CD4-positive, alpha-beta memory T cell (primary cell): ENCODE measurements at regions of chr19 and their contacts with region 1.

Region 1: GRCh38 chr19:34926685-34927375 is at the start of gene ZNF30:
- DNase-seq: peak; percentile 62 to 76 (median 69)
- H3K4me3 ChIP-seq: peak within 1 kb of the TSS; percentile 25 to 67
- H3K4me3 Mint-ChIP-seq: peak within 1 kb of the TSS; percentile 89 to 94 (median 92)
- H3K27ac ChIP-seq: peak within 1 kb of the TSS; percentile 31
- H3K27ac Mint-ChIP-seq: peak within 1 kb of the TSS in 6 of 7 donors; percentile 61 to 84 (median 78)
- H3K4me1 ChIP-seq: peaks cover 20% of the 10 kb centered on the region
- H3K4me1 Mint-ChIP-seq: peaks cover 13 to 24% (median 19%) of the 10 kb centered on the region in 4 donors
- H3K27me3 ChIP-seq: no peaks in the 10 kb centered on the region
- H3K27me3 Mint-ChIP-seq: no peaks in the 10 kb centered on the region
- total RNA-seq, gene ZNF30: 9.2 to 9.7 TPM

Region 2: GRCh38 chr19:34856052-34856451 is 70.8 kb before region 1 on chr19:
- CTCF ChIA-PET with region 1: no interaction called
- POLR2A ChIA-PET with region 1: interaction called, 9 read pairs
- intact Hi-C with region 1: loop called (anchors 5 kb)
- DNase-seq: no peak
- H3K4me3 ChIP-seq: no peak overlapping the region
- H3K4me3 Mint-ChIP-seq: no peak overlapping the region
- H3K27ac ChIP-seq: no peak overlapping the region
- H3K27ac Mint-ChIP-seq: no peak overlapping the region
- H3K4me1 ChIP-seq: peaks cover 30% of the 10 kb centered on the region
- H3K4me1 Mint-ChIP-seq: peaks cover 39 to 78% (median 59%) of the 10 kb centered on the region in 4 donors
- H3K27me3 ChIP-seq: no peaks in the 10 kb centered on the region
- H3K27me3 Mint-ChIP-seq: no peaks in the 10 kb centered on the region

Region 3: DNA sequence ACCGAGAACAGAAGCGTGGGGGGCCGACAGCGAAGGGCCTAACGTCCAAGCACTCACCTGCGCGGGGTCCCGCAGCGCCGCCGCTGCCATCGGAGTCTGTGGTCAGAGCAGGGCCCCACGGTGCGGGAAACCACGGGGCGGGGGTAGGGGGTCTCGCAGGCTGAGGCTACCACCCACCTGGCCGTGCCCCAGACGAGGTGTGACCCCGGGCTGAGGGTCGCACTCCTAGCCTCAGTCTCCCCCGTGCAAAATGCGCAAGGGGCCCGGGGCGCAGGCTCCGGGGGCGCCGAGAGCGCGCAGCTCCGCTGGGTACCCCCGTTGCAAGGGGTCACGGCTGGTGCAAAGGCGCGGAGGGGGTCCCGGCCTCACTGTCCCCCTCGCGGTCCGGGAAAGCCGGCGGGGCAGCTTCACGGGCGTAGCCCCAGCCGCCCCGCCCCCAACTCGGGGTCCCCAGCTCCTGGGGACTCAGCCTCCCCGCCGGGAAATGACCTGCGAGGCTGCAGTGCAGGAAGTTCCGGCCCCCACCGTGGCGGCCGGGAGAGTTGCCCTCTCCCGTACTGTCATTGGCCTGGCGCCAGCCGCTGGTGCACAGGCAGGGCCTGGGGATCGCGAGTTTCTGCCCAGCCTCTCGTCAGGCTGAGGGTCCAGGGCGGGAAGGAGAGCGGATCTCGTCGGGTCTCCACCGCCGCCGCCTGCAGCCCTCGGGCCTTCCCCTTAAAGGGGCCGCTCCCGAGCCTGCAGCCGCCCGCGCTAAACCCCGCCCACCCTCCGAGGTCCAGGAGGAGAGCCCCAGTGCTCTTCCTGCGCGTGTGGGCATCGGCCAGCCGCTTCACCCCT is 37.0 kb after region 1 on chr19 and contains the start of gene ZNF792:
- CTCF ChIA-PET with region 1: interaction called, 4 read pairs
- POLR2A ChIA-PET with region 1: interaction called, 17 read pairs
- intact Hi-C with region 1: loop called (anchors 5 kb)
- DNase-seq: peak; percentile 36 to 57 (median 39)
- H3K4me3 ChIP-seq: peak within 1 kb of the TSS; percentile 62 to 80
- H3K4me3 Mint-ChIP-seq: peak within 1 kb of the TSS; percentile 93 to 99 (median 97)
- H3K27ac ChIP-seq: peak within 1 kb of the TSS; percentile 49
- H3K27ac Mint-ChIP-seq: peak within 1 kb of the TSS; percentile 88 to 97 (median 93)
- H3K4me1 ChIP-seq: peaks cover 18% of the 10 kb centered on the region
- H3K4me1 Mint-ChIP-seq: peaks cover 18 to 28% (median 24%) of the 10 kb centered on the region in 4 donors
- H3K27me3 ChIP-seq: no peaks in the 10 kb centered on the region
- H3K27me3 Mint-ChIP-seq: no peaks in the 10 kb centered on the region
- total RNA-seq, gene ZNF792: 33.9 to 34.7 TPM

Region 4: DNA sequence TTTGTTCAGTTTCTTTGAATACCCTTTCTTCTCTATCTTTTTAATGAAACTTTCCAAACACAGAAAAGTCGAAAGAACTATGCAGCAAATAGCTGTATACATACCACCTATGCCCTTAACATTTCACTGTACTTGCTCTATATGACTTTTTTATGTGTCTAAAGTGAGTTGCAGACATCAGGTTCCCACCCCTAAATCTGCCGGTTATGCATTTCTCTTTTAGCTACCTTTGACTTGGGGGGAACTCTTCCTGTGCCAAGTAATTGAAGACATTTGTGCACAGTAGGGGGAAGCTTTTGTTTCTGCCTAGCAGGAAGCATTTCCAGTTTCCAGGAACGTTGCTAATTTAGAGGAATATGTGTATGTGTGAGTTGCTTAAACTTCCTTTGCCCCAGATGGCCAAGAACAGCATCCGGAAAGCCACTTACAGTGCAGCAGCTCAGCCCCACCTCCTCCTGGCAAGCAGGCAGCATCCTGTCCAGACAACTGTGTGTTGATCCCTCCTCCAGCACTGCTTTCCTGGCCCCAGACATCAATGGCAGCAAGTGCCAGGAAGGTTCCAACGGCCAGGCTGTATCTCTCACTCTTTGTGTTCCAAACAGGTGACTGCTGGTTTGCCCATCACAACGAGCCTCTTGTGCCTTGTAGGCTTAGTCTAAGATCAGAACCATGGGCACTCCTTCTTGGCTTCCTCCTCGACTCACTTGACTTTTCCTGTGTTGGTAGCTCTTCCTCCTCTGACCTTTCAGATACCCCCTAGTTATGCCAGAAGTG is 58.6 kb after region 1 on chr19:
- CTCF ChIA-PET with region 1: no interaction called
- POLR2A ChIA-PET with region 1: no interaction called
- intact Hi-C with region 1: no loop called
- DNase-seq: peak in 1 of 5 donors; percentile 15
- H3K4me3 ChIP-seq: no peak overlapping the region
- H3K4me3 Mint-ChIP-seq: peak overlapping the region; percentile 7 to 66 (median 50)
- H3K27ac ChIP-seq: no peak overlapping the region
- H3K27ac Mint-ChIP-seq: peak overlapping the region in 6 of 7 donors; percentile 19 to 83 (median 60)
- H3K4me1 ChIP-seq: peaks cover 10% of the 10 kb centered on the region
- H3K4me1 Mint-ChIP-seq: peaks cover 12 to 19% (median 13%) of the 10 kb centered on the region in 4 donors
- H3K27me3 ChIP-seq: no peaks in the 10 kb centered on the region
- H3K27me3 Mint-ChIP-seq: peaks cover 0 to 2% of the 10 kb centered on the region in 2 donors